ENCODE measurements at regions of chr10 and their contacts with region 1.

Region 1: GRCh38 chr10:34637418-34637911 is 177.6 kb downstream of the PARD3 start:
- DNase-seq: peak in 1 of 2 donors; percentile 38
- ATAC-seq: peak; percentile 28 to 44
- H3K4me3 ChIP-seq: no peak overlapping the region
- H3K27ac ChIP-seq: no peak overlapping the region
- H3K4me1 ChIP-seq: peaks cover 15 to 24% of the 10 kb centered on the region in 2 donors
- H3K27me3 ChIP-seq: no peaks in the 10 kb centered on the region
- CTCF ChIP-seq: peak; percentile 77 to 95 (median 86)
- POLR2A ChIP-seq: no peak

Region 2: GRCh38 chr10:33193057-33193700 is 1444.3 kb before region 1 on chr10:
- in situ Hi-C with region 1: loop called (anchors 10 to 25 kb)
- intact Hi-C with region 1: loop called (anchors 5 kb)
- DNase-seq: peak; percentile 64 to 72
- ATAC-seq: peak; percentile 79 to 91
- H3K4me3 ChIP-seq: no peak overlapping the region
- H3K27ac ChIP-seq: peak overlapping the region; percentile 12 to 51 (median 40)
- H3K4me1 ChIP-seq: peaks cover 0 to 31% of the 10 kb centered on the region in 2 donors
- H3K27me3 ChIP-seq: no peaks in the 10 kb centered on the region
- CTCF ChIP-seq: peak; percentile 49 to 84 (median 73)
- POLR2A ChIP-seq: no peak

Region 3: DNA sequence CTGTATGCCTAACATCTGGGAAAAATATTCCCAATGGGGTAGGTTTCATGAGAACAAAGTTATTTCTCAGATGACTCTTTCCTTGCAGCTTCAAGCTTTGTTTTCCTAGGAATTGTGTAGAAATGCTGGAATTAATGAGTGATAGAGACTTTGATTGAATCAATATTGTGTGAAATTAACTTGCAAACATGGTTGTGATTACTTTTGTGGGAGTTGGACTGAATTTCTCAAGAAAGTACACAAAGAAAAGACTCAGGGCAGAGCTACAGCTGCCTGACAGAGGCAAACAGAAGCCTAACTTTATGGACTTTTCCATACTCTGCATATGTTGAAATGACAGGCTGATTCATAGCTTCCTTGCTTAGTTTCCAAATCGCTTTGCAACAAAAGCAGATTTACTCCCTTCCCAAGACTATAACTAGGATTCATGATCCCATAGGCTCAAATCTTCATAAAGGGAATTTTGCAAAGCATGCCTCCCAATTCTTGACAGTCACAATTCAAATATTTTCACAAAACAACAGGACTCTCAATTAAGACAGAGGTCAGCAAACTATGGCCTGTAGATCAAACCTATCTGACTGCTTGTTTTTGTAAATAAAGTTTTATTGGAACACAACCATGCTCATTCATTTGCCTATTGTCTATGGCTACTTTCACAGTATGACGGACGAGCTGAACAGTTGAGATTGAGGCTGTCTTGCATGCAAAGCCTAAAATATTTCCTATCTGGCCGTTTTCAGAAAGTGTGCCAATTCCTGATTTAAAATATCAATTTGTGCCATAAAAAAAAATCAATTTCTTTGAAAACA is 1330.6 kb before region 1 on chr10:
- in situ Hi-C with region 1: loop called in 2 of 4 experiments (anchors 25 kb)
- intact Hi-C with region 1: no loop called
- DNase-seq: no peak
- ATAC-seq: no peak
- H3K4me3 ChIP-seq: no peak overlapping the region
- H3K27ac ChIP-seq: peak overlapping the region in 3 of 4 donors; percentile 13 to 60 (median 52)
- H3K4me1 ChIP-seq: peaks cover 40 to 57% of the 10 kb centered on the region in 2 donors
- H3K27me3 ChIP-seq: no peaks in the 10 kb centered on the region
- CTCF ChIP-seq: no peak
- POLR2A ChIP-seq: no peak

Region 4: GRCh38 chr10:34031400-34031799 is 606.1 kb before region 1 on chr10:
- in situ Hi-C with region 1: loop called in 1 of 4 experiments (anchors 25 kb)
- intact Hi-C with region 1: no loop called
- DNase-seq: peak; percentile 55 to 74
- ATAC-seq: peak; percentile 89 to 97
- H3K4me3 ChIP-seq: no peak overlapping the region
- H3K27ac ChIP-seq: no peak overlapping the region
- H3K4me1 ChIP-seq: peaks cover 0 to 4% of the 10 kb centered on the region in 2 donors
- H3K27me3 ChIP-seq: no peaks in the 10 kb centered on the region
- CTCF ChIP-seq: no peak
- POLR2A ChIP-seq: no peak

Region 5: GRCh38 chr10:34528320-34528719 is 109.1 kb before region 1 on chr10:
- in situ Hi-C with region 1: no loop called
- intact Hi-C with region 1: no loop called
- DNase-seq: no peak
- ATAC-seq: peak; percentile 38 to 58
- H3K4me3 ChIP-seq: no peak overlapping the region
- H3K27ac ChIP-seq: no peak overlapping the region
- H3K4me1 ChIP-seq: peaks cover 23 to 29% of the 10 kb centered on the region in 2 donors
- H3K27me3 ChIP-seq: no peaks in the 10 kb centered on the region
- CTCF ChIP-seq: no peak
- POLR2A ChIP-seq: no peak

Region 6: DNA sequence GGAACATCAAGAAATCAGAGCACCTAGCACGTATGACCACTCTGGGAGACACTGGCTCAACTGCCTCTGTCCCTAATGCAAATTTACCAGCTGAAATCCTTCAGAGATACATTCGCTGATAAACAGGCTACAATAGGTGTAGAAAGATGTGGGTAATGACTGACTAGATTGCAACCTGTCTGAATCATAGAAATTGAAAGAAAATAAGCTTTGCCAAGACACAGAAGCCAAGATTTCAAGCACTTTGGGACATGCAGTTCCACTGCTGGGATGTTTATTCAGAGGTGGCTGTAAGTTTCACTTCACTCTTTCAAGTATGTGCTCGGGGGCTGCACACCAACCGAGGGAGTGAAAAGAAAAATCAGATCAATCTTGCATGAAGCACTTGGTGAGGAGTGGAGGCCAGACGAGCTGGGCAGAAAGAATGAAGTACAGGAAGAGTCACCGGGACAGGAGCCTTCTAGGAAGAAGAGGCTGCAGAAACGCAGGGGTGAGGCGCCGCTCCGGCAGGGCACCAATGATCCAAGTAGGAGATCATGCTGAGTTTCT is 99.1 kb before region 1 on chr10:
- in situ Hi-C with region 1: no loop called
- intact Hi-C with region 1: loop called (anchors 5 kb)
- DNase-seq: no peak
- ATAC-seq: no peak
- H3K4me3 ChIP-seq: peak overlapping the region in 2 of 4 donors; percentile 14 to 23
- H3K27ac ChIP-seq: no peak overlapping the region
- H3K4me1 ChIP-seq: peaks cover 7 to 28% of the 10 kb centered on the region in 2 donors
- H3K27me3 ChIP-seq: no peaks in the 10 kb centered on the region
- CTCF ChIP-seq: no peak
- POLR2A ChIP-seq: no peak

Region 7: GRCh38 chr10:34584164-34584563 is 53.3 kb before region 1 on chr10:
- in situ Hi-C with region 1: no loop called
- intact Hi-C with region 1: no loop called
- DNase-seq: no peak
- ATAC-seq: peak; percentile 71 to 88
- H3K4me3 ChIP-seq: no peak overlapping the region
- H3K27ac ChIP-seq: peak overlapping the region in 3 of 4 donors; percentile 8 to 39 (median 18)
- H3K4me1 ChIP-seq: peaks cover 23 to 35% of the 10 kb centered on the region in 2 donors
- H3K27me3 ChIP-seq: no peaks in the 10 kb centered on the region
- CTCF ChIP-seq: no peak
- POLR2A ChIP-seq: no peak

Measured in gastrocnemius medialis (tissue), 4 donors.